ENCODE measurements at regions of chr19 and their contacts with region 1.

Region 1: DNA sequence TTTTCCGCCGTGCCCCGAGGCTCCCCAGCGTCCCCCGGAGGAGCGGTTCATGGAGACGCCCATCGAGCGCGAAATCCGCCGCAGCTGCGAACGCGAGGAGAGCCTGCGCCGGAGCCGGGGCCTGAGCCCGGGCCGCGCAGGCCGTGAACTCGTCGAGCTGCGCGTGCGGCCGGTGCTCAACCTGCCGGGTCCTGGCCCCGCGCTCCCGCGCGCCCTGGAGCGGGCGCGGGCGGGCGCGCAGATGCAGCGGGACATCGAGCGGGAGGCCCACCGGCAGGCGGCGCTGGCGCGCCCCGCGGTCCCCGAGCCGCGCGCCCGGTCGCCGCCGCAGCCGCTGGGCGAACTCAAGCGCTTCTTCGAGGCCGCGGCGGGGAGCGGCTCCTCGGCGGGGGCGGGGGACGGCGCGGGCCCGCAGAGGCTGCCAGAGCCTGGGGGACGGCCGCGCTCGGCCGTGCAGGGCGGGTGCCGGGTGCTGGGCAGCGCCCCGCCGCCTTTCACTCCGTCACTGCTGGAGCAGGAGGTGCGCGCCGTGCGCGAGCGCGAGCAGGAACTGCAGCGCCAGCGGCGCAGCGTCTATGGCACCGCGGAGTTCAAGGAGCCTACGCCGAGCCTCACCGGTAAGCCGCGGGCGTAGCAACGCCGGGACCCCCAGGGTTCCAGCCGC is 807 bp downstream of the MISP3 start:
- DNase-seq: peak; percentile 78 to 84 (median 81)
- ATAC-seq: peak; percentile 66
- H3K4me3 ChIP-seq: peak overlapping the region; percentile 73 to 94
- H3K27ac ChIP-seq: peak overlapping the region; percentile 85 to 97 (median 95)
- H3K4me1 ChIP-seq: peaks cover 35% of the 10 kb centered on the region
- H3K27me3 ChIP-seq: no peaks in the 10 kb centered on the region
- CTCF ChIP-seq: peak in 5 of 7 experiments; percentile 14 to 98 (median 81)
- POLR2A ChIP-seq: peak; percentile 74 to 84 (median 80)

Region 2: DNA sequence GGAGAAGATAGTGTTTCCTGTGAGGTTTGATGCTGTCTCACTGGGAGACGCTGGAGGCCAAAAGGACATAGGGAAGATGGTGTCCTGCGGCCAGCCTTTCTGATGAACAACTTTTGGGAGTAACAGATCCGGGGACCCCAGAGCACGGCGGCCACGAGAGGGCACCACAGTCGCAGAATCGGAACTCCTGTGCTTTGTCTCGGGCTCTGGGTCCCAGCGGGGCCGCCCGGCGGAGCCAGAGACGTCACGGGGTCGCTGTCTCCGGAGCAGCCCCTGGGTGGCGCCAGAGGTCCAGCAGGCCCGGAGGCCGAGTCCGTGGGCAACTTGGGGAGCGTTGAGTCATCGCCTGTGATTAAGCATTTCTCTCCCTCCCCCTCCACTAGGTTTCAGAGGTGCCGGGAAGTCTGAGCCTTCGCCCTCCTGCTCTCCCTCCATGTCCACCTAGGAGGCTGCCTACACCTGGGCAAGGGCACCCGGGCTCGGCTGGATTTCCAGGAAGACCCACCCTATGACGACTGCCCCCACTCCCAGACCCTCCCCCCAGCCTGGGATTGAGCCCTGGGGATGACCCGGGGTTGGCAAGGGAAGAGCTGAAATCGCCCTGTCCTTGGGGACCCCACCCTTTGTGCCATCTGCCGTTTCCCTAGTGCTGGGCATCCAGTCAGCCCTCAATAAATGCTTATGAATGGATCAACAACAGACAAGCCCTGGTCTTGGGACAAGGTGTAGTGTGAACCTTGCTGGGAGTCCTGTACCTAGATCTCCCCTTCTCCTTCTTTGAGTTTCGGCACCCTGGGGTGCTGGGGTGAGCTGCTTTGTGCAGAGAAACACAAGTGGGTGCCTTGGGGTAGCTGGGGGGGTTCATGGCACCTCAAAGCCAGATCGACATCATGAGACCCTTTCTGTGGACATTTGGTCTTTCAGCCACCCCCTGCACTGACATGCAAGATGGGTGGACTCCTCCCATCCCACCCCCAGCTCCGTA is 193.0 kb before region 1 on chr19:
- intact Hi-C with region 1: loop called (anchors 5 kb)
- DNase-seq: peak; percentile 98 to 99 (median 99)
- ATAC-seq: peak; percentile 87
- H3K4me3 ChIP-seq: no peak overlapping the region
- H3K27ac ChIP-seq: peak overlapping the region; percentile 79 to 90 (median 88)
- H3K4me1 ChIP-seq: peaks cover 52% of the 10 kb centered on the region
- H3K27me3 ChIP-seq: no peaks in the 10 kb centered on the region
- CTCF ChIP-seq: peak; percentile 98 to 100 (median 100)
- POLR2A ChIP-seq: peak in 2 of 3 donors; percentile 60 to 75

Measured in body of pancreas (tissue), 4 donors.